Posterior vena cava (tissue), 2 donors: ENCODE measurements at regions of chr9 and their contacts with region 1.

Region 1: GRCh38 chr9:114592356-114592755 is 4.8 kb downstream of the ATP6V1G1 start:
- DNase-seq: no peak

Region 2: GRCh38 chr9:114098016-114098935 is 494.1 kb before region 1 on chr9:
- intact Hi-C with region 1: no loop called
- DNase-seq: peak; percentile 75

Region 3: GRCh38 chr9:114505187-114506081 is 86.9 kb before region 1 on chr9 and contains the start of gene WHRN:
- intact Hi-C with region 1: loop called (anchors 5 to 10 kb)
- DNase-seq: peak; percentile 97
- total RNA-seq, gene WHRN: 2.5 to 2.6 TPM